ENCODE measurements at regions of chr6 and their contacts with region 1.

Region 1: GRCh38 chr6:26329763-26330511 is 35.1 kb upstream of the BTN3A2 start:
- DNase-seq: peak; percentile 80
- ATAC-seq: peak; percentile 37
- H3K4me3 Mint-ChIP-seq: peak overlapping the region; percentile 88
- H3K27ac Mint-ChIP-seq: peak overlapping the region; percentile 70
- H3K4me1 Mint-ChIP-seq: peaks cover 38% of the 10 kb centered on the region
- H3K27me3 Mint-ChIP-seq: peaks cover 10% of the 10 kb centered on the region

Region 2: DNA sequence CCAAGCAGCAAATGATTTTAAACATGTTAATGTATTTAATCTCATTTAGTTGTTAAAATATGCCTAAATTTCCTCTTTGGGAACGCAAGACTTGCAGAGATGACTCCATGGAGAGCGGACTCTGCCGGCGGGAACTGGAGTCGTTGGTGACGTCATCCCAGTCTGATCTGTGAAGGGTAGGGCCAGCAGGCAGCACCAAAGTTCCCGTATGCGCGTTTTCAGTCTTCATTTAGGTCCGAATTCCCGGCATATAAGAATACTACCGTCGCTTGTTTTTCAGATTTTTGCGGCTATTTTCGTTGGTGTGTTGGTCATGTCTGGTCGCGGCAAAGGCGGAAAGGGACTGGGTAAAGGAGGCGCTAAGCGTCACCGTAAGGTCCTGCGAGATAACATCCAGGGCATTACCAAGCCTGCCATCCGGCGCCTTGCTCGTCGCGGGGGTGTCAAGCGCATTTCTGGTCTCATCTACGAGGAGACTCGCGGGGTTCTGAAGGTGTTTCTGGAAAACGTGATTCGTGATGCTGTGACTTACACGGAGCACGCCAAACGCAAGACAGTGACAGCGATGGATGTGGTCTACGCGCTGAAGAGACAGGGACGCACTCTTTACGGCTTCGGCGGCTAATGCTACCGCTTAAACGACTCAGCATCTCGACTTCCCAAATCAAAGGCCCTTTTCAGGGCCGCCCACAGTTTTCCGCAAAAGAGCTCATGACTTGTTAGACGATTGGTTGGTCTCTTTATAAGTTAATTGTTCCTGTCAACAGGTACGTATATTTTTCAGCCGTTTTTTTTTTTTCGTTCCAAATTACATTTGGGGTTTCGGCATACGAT is 125.4 kb before region 1 on chr6:
- CTCF ChIA-PET with region 1: no interaction called
- POLR2A ChIA-PET with region 1: interaction called, 10 read pairs
- intact Hi-C with region 1: no loop called
- DNase-seq: peak; percentile 92
- ATAC-seq: peak; percentile 69
- H3K4me3 Mint-ChIP-seq: no peak overlapping the region
- H3K27ac Mint-ChIP-seq: no peak overlapping the region
- H3K4me1 Mint-ChIP-seq: peaks cover 20% of the 10 kb centered on the region
- H3K27me3 Mint-ChIP-seq: no peaks in the 10 kb centered on the region

Region 3: GRCh38 chr6:26312501-26313390 is 17.2 kb before region 1 on chr6:
- CTCF ChIA-PET with region 1: interaction called, 3 read pairs
- POLR2A ChIA-PET with region 1: no interaction called
- intact Hi-C with region 1: loop called (anchors 1 kb)
- DNase-seq: peak; percentile 89
- ATAC-seq: peak; percentile 69
- H3K4me3 Mint-ChIP-seq: peak overlapping the region; percentile 88
- H3K27ac Mint-ChIP-seq: peak overlapping the region; percentile 90
- H3K4me1 Mint-ChIP-seq: peaks cover 37% of the 10 kb centered on the region
- H3K27me3 Mint-ChIP-seq: peaks cover 3% of the 10 kb centered on the region

Region 4: GRCh38 chr6:26520853-26521599 is 191.1 kb after region 1 on chr6:
- CTCF ChIA-PET with region 1: no interaction called
- POLR2A ChIA-PET with region 1: no interaction called
- intact Hi-C with region 1: loop called in 1 of 2 experiments (anchors 1 kb)
- DNase-seq: peak; percentile 89
- ATAC-seq: peak; percentile 73
- H3K4me3 Mint-ChIP-seq: peak overlapping the region; percentile 85
- H3K27ac Mint-ChIP-seq: peak overlapping the region; percentile 94
- H3K4me1 Mint-ChIP-seq: peaks cover 24% of the 10 kb centered on the region
- H3K27me3 Mint-ChIP-seq: no peaks in the 10 kb centered on the region

Region 5: DNA sequence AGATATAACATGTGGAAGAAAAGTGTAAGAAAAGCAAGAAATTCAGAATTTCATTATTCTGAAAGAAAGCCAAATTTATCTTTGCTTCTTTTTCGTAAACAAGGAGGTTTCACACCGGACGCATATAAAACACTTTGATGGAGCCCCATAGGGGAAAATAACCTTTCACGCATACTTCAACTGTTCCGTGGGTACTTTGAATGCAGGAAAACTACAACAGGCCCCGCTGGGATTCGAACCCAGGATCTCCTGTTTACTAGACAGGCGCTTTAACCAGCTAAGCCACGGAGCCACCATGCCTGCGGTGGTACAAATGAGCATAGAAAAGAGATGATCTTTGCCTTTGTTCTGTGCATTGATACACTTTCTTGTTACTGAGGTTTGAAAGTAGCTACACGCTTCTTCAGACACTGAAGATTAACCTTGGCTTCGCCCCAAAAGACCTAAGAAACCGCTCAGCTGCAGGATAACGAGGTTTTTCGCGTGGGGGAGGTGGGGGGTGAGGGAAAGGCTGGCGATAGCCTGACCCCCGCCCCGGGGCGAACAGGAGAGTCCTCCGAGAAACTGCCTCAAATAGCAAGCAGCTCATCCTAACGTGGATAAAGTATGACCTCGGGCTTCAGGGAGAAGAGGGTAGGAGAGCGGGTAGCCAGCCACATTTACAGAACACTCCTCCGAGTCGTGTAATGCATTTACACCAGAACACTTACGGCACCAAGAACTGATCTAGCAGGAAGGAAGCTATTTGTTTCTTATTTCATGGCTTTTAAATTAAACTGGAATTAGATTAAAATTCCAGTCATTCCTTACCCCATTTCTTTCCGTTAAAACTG is 203.0 kb after region 1 on chr6:
- CTCF ChIA-PET with region 1: interaction called, 6 read pairs
- POLR2A ChIA-PET with region 1: interaction called, 4 read pairs
- intact Hi-C with region 1: loop called (anchors 1 to 5 kb)
- DNase-seq: peak; percentile 94
- ATAC-seq: peak; percentile 40
- H3K4me3 Mint-ChIP-seq: peak overlapping the region; percentile 96
- H3K27ac Mint-ChIP-seq: peak overlapping the region; percentile 95
- H3K4me1 Mint-ChIP-seq: peaks cover 40% of the 10 kb centered on the region
- H3K27me3 Mint-ChIP-seq: no peaks in the 10 kb centered on the region

Region 6: GRCh38 chr6:26568601-26569432 is 238.9 kb after region 1 on chr6:
- CTCF ChIA-PET with region 1: interaction called, 10 read pairs
- POLR2A ChIA-PET with region 1: no interaction called
- intact Hi-C with region 1: loop called (anchors 1 to 2 kb)
- DNase-seq: peak; percentile 97
- ATAC-seq: peak; percentile 74
- H3K4me3 Mint-ChIP-seq: peak overlapping the region; percentile 85
- H3K27ac Mint-ChIP-seq: peak overlapping the region; percentile 81
- H3K4me1 Mint-ChIP-seq: peaks cover 29% of the 10 kb centered on the region
- H3K27me3 Mint-ChIP-seq: peaks cover 2% of the 10 kb centered on the region

Measured in activated CD4-positive, alpha-beta T cell treated with anti-CD3 and anti-CD28 coated beads for 36 hours (primary cell).